Naive thymus-derived CD4-positive, alpha-beta T cell (primary cell): ENCODE measurements at regions of chr19 and their contacts with region 1.

Region 1: GRCh38 chr19:3154957-3155736 is 19.3 kb downstream of the GNA15 start:
- DNase-seq: peak in 8 of 9 donors; percentile 54 to 82 (median 68)
- ATAC-seq: peak; percentile 94
- H3K4me3 ChIP-seq: peak overlapping the region; percentile 31
- H3K4me3 Mint-ChIP-seq: peak overlapping the region in 5 of 10 donors; percentile 53 to 80 (median 72)
- H3K27ac ChIP-seq: peak overlapping the region; percentile 49
- H3K27ac Mint-ChIP-seq: peak overlapping the region in 6 of 9 donors; percentile 69 to 91 (median 86)
- H3K4me1 ChIP-seq: peaks cover 17 to 24% of the 10 kb centered on the region in 2 donors
- H3K4me1 Mint-ChIP-seq: peaks cover 0 to 19% (median 0%) of the 10 kb centered on the region in 7 donors
- H3K27me3 ChIP-seq: no peaks in the 10 kb centered on the region
- H3K27me3 Mint-ChIP-seq: no peaks in the 10 kb centered on the region

Region 2: GRCh38 chr19:3132971-3133792 is 22.0 kb before region 1 on chr19:
- CTCF ChIA-PET with region 1: interaction called, 8 read pairs
- POLR2A ChIA-PET with region 1: no interaction called
- intact Hi-C with region 1: loop called in 1 of 2 experiments (anchors 1 kb)
- DNase-seq: peak; percentile 41 to 81 (median 51)
- ATAC-seq: peak; percentile 93
- H3K4me3 ChIP-seq: peak overlapping the region; percentile 13
- H3K4me3 Mint-ChIP-seq: peak overlapping the region; percentile 47 to 87 (median 70)
- H3K27ac ChIP-seq: peak overlapping the region; percentile 45
- H3K27ac Mint-ChIP-seq: peak overlapping the region in 6 of 9 donors; percentile 58 to 97 (median 68)
- H3K4me1 ChIP-seq: peaks cover 8 to 11% of the 10 kb centered on the region in 2 donors
- H3K4me1 Mint-ChIP-seq: peaks cover 7 to 53% (median 22%) of the 10 kb centered on the region in 7 donors
- H3K27me3 ChIP-seq: peaks cover 0 to 6% of the 10 kb centered on the region in 2 donors
- H3K27me3 Mint-ChIP-seq: peaks cover 0 to 23% (median 0%) of the 10 kb centered on the region in 5 donors